ENCODE measurements at regions of chr7 and their contacts with region 1.

Region 1: GRCh38 chr7:87517136-87517815 is 41.8 kb upstream of the ABCB4 start:
- DNase-seq: no peak
- H3K4me3 ChIP-seq: no peak overlapping the region
- H3K27ac ChIP-seq: no peak overlapping the region
- H3K4me1 ChIP-seq: no peaks in the 10 kb centered on the region
- H3K27me3 ChIP-seq: no peaks in the 10 kb centered on the region
- CTCF ChIP-seq: no peak
- EP300 ChIP-seq: no peak
- POLR2A ChIP-seq: no peak
- RAD21 ChIP-seq: no peak

Region 2: GRCh38 chr7:87495366-87495765 is 21.9 kb before region 1 on chr7:
- CTCF ChIA-PET with region 1: no interaction called
- POLR2A ChIA-PET with region 1: no interaction called
- DNase-seq: no peak
- H3K4me3 ChIP-seq: no peak overlapping the region
- H3K27ac ChIP-seq: no peak overlapping the region
- H3K4me1 ChIP-seq: no peaks in the 10 kb centered on the region
- H3K27me3 ChIP-seq: no peaks in the 10 kb centered on the region
- CTCF ChIP-seq: no peak
- EP300 ChIP-seq: no peak
- POLR2A ChIP-seq: no peak
- RAD21 ChIP-seq: no peak

Region 3: DNA sequence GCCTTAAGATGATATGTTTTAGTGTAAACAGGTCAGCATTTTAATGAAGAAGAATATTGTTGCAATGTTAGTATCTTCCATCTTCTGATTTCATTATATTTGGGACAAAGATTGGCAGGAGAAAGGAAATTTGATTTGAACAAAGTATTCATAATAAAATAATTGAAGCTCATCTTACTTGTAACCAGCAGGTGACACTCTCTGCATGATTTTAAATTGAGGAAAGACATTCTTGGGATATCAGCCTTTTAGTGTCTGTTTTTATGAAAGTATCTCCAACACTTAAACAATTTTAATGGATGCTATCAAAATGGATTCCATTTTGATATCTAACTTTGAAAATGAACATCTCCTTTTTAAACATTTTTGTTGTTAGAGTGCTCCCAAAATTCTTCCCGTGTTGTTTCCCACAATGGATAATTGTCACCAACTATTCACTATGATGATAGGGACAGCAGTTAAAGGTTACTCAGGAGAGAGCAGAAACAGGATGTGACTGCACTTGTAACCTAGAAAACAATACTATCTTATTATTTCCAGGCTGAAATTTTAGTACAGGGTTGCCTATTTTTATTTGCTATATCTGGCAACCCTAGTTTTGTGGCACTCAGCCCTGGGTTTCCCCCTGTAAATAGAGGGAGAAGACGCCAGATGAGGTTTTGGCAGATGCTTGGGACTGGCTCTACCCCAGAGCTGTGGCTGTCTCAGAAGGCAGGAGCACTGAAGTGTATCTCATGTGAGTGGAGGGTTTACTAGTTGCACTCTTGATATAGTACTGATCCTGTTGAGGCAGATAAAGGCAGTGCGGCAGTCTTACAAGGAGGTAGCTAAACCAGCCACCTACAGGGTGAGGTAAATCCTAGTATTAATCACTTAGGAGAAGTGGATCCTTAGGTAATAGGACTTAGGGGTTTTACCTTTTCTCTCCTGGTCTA is 10.8 kb before region 1 on chr7:
- CTCF ChIA-PET with region 1: interaction called, 12 read pairs
- POLR2A ChIA-PET with region 1: no interaction called
- DNase-seq: no peak
- H3K4me3 ChIP-seq: no peak overlapping the region
- H3K27ac ChIP-seq: no peak overlapping the region
- H3K4me1 ChIP-seq: no peaks in the 10 kb centered on the region
- H3K27me3 ChIP-seq: no peaks in the 10 kb centered on the region
- CTCF ChIP-seq: peak in 2 of 3 experiments; percentile 20 to 32; a peak in 2 of 4 replicates
- EP300 ChIP-seq: no peak
- POLR2A ChIP-seq: no peak
- RAD21 ChIP-seq: peak; percentile 49 to 68